GM12878 (cell line): ENCODE measurements at regions of chr1 and their contacts with region 1.

Region 1: GRCh38 chr1:9651565-9652378 is at the start of gene PIK3CD:
- DNase-seq: no peak
- ATAC-seq: peak; percentile 47
- H3K4me3 ChIP-seq: peak within 1 kb of the TSS; percentile 86
- H3K27ac ChIP-seq: peak within 1 kb of the TSS; percentile 89
- H3K4me1 ChIP-seq: peaks cover 8% of the 10 kb centered on the region
- H3K27me3 ChIP-seq: no peaks in the 10 kb centered on the region
- CTCF ChIP-seq: no peak
- EP300 ChIP-seq: no peak
- POLR2A ChIP-seq: peak; percentile 79
- RAD21 ChIP-seq: no peak
- polyA plus RNA-seq, gene PIK3CD: 7.0 to 12.7 TPM

Region 2: GRCh38 chr1:9340172-9340854 is 311.5 kb before region 1 on chr1:
- CTCF ChIA-PET with region 1: no interaction called
- POLR2A ChIA-PET with region 1: no interaction called
- RAD21 ChIA-PET with region 1: no interaction called
- SMC1A ChIA-PET with region 1: no interaction called
- in situ Hi-C with region 1: no loop called
- intact Hi-C with region 1: no loop called
- DNase-seq: no peak
- ATAC-seq: no peak
- H3K4me3 ChIP-seq: no peak overlapping the region
- H3K27ac ChIP-seq: no peak overlapping the region
- H3K4me1 ChIP-seq: no peaks in the 10 kb centered on the region
- H3K27me3 ChIP-seq: no peaks in the 10 kb centered on the region; a peak in 1 of 4 replicates
- CTCF ChIP-seq: no peak
- EP300 ChIP-seq: no peak
- POLR2A ChIP-seq: no peak
- RAD21 ChIP-seq: no peak

Region 3: DNA sequence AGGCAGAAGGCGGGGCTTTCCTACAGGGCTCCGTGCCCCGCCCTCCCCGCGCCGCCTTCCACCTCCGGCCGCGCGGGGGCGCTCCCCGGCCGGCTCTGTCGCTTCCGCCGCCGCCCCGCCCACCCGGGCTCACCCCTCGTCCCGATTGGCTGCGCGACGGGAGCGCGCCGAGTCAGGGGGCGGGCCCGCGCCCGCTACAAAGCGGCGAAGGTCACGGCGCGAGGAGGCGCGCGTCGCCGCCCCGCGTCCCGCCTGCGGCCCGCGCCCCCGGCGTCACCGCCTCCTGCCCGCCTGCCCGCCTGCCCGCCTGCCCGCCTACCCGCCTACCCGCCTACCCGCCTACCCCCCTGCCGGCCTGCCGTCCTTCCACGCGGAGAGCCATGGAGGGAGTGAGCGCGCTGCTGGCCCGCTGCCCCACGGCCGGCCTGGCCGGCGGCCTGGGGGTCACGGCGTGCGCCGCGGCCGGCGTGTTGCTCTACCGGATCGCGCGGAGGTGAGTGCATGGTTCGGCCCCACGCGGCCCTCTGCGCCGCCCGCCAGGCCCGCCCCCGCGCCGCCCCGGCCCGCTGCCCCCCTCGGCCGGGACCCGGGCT is 63.1 kb before region 1 on chr1 and contains the start of gene TMEM201:
- CTCF ChIA-PET with region 1: interaction called, 3 read pairs
- POLR2A ChIA-PET with region 1: interaction called, 6 read pairs
- RAD21 ChIA-PET with region 1: no interaction called
- SMC1A ChIA-PET with region 1: interaction called, 3 read pairs
- in situ Hi-C with region 1: no loop called
- intact Hi-C with region 1: loop called (anchors 2 kb)
- DNase-seq: peak; percentile 46
- ATAC-seq: peak; percentile 78
- H3K4me3 ChIP-seq: peak within 1 kb of the TSS; percentile 73
- H3K27ac ChIP-seq: peak within 1 kb of the TSS; percentile 67
- H3K4me1 ChIP-seq: peaks cover 26% of the 10 kb centered on the region
- H3K27me3 ChIP-seq: no peaks in the 10 kb centered on the region
- CTCF ChIP-seq: peak; percentile 61 to 89 (median 66); a peak in 5 of 6 replicates
- EP300 ChIP-seq: no peak
- POLR2A ChIP-seq: peak; percentile 72
- RAD21 ChIP-seq: peak; percentile 40; the same call in 1 of the 2 replicates
- polyA plus RNA-seq, gene TMEM201: 0.13 to 0.33 TPM

Region 4: GRCh38 chr1:9671377-9672140 is 19.8 kb after region 1 on chr1:
- CTCF ChIA-PET with region 1: interaction called, 4 read pairs
- POLR2A ChIA-PET with region 1: interaction called, 14 read pairs
- RAD21 ChIA-PET with region 1: interaction called, 4 read pairs
- SMC1A ChIA-PET with region 1: interaction called, 8 read pairs
- in situ Hi-C with region 1: no loop called
- intact Hi-C with region 1: no loop called
- DNase-seq: no peak
- ATAC-seq: no peak
- H3K4me3 ChIP-seq: no peak overlapping the region
- H3K27ac ChIP-seq: no peak overlapping the region; the same call in 1 of the 2 replicates
- H3K4me1 ChIP-seq: peaks cover 18% of the 10 kb centered on the region
- H3K27me3 ChIP-seq: no peaks in the 10 kb centered on the region
- CTCF ChIP-seq: no peak
- EP300 ChIP-seq: no peak
- POLR2A ChIP-seq: no peak
- RAD21 ChIP-seq: no peak

Region 5: GRCh38 chr1:9689011-9689706 is 37.4 kb after region 1 on chr1:
- CTCF ChIA-PET with region 1: interaction called, 12 read pairs
- POLR2A ChIA-PET with region 1: interaction called, 67 read pairs
- RAD21 ChIA-PET with region 1: interaction called, 29 read pairs
- SMC1A ChIA-PET with region 1: interaction called, 56 read pairs
- in situ Hi-C with region 1: no loop called
- intact Hi-C with region 1: loop called (anchors 2 kb)
- DNase-seq: no peak
- ATAC-seq: peak; percentile 73
- H3K4me3 ChIP-seq: peak overlapping the region; percentile 96
- H3K27ac ChIP-seq: peak overlapping the region; percentile 82
- H3K4me1 ChIP-seq: peaks cover 27% of the 10 kb centered on the region
- H3K27me3 ChIP-seq: no peaks in the 10 kb centered on the region
- CTCF ChIP-seq: no peak
- EP300 ChIP-seq: no peak
- POLR2A ChIP-seq: peak; percentile 45; the same call in 1 of the 2 replicates
- RAD21 ChIP-seq: no peak

Region 6: GRCh38 chr1:9900142-9901043 is 248.6 kb after region 1 on chr1:
- CTCF ChIA-PET with region 1: no interaction called
- POLR2A ChIA-PET with region 1: no interaction called
- RAD21 ChIA-PET with region 1: no interaction called
- SMC1A ChIA-PET with region 1: no interaction called
- in situ Hi-C with region 1: no loop called
- intact Hi-C with region 1: no loop called
- DNase-seq: no peak
- ATAC-seq: peak; percentile 83
- H3K4me3 ChIP-seq: peak overlapping the region; percentile 7; the same call in 1 of the 2 replicates
- H3K27ac ChIP-seq: no peak overlapping the region
- H3K4me1 ChIP-seq: peaks cover 31% of the 10 kb centered on the region
- H3K27me3 ChIP-seq: no peaks in the 10 kb centered on the region
- CTCF ChIP-seq: no peak
- EP300 ChIP-seq: no peak
- POLR2A ChIP-seq: 0 out of 2 replicates have a peak, but pooled peaks have one; percentile 44
- RAD21 ChIP-seq: no peak

Region 7: DNA sequence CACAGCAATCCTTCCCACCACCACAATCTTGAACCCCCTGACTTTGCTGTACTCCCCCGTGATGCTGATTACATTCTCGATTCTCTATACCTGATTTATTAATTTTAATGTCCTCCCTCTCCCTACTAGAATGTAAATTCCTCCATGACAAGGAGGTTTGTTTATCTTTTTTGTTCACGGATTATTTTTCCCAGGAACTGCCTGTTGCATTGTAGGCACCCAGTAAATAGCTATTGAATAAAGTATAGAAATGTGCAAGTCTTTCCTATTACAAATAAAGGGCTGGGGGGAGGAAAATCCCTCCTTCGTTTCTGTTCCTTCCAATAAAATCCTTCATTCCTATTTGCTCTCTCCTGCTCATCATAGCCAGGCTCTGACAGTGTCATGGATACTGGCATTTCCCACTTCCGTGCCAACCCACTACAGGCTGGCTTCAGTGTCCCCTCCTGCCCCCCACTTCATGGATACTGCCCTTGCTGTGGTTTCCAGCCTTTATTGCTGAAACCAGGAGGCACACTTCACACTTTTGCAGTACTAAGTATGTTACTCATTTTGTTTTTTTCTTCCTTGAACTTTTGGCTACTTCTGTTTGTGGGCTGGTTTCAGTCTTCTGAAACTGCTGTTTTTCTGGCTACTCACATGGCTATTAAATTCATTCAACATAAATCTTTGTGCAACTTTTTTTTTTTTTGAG is 566.1 kb after region 1 on chr1:
- CTCF ChIA-PET with region 1: no interaction called
- POLR2A ChIA-PET with region 1: no interaction called
- RAD21 ChIA-PET with region 1: no interaction called
- SMC1A ChIA-PET with region 1: no interaction called
- in situ Hi-C with region 1: no loop called
- intact Hi-C with region 1: no loop called
- DNase-seq: no peak
- ATAC-seq: peak; percentile 50
- H3K4me3 ChIP-seq: no peak overlapping the region
- H3K27ac ChIP-seq: no peak overlapping the region
- H3K4me1 ChIP-seq: peaks cover 10% of the 10 kb centered on the region; the same call in 1 of the 2 replicates
- H3K27me3 ChIP-seq: no peaks in the 10 kb centered on the region
- CTCF ChIP-seq: no peak
- EP300 ChIP-seq: no peak
- POLR2A ChIP-seq: no peak
- RAD21 ChIP-seq: no peak